ENCODE measurements at regions of chr4 and their contacts with region 1.

Region 1: GRCh38 chr4:6873792-6874461 is 35.7 kb upstream of the TBC1D14 start:
- DNase-seq: peak; percentile 89
- H3K4me3 Mint-ChIP-seq: no peak overlapping the region
- H3K27ac Mint-ChIP-seq: no peak overlapping the region
- H3K4me1 Mint-ChIP-seq: peaks cover 10% of the 10 kb centered on the region
- H3K27me3 Mint-ChIP-seq: no peaks in the 10 kb centered on the region

Region 2: GRCh38 chr4:6673660-6674499 is 200.0 kb before region 1 on chr4:
- CTCF ChIA-PET with region 1: interaction called, 33 read pairs
- DNase-seq: peak; percentile 96
- H3K4me3 Mint-ChIP-seq: peak overlapping the region; percentile 93
- H3K27ac Mint-ChIP-seq: peak overlapping the region; percentile 98
- H3K4me1 Mint-ChIP-seq: peaks cover 50% of the 10 kb centered on the region
- H3K27me3 Mint-ChIP-seq: peaks cover 4% of the 10 kb centered on the region

Region 3: GRCh38 chr4:6727081-6727942 is 146.6 kb before region 1 on chr4:
- CTCF ChIA-PET with region 1: interaction called, 13 read pairs
- DNase-seq: no peak
- H3K4me3 Mint-ChIP-seq: no peak overlapping the region
- H3K27ac Mint-ChIP-seq: no peak overlapping the region
- H3K4me1 Mint-ChIP-seq: peaks cover 10% of the 10 kb centered on the region
- H3K27me3 Mint-ChIP-seq: peaks cover 4% of the 10 kb centered on the region

Region 4: GRCh38 chr4:6783053-6783981 is 90.6 kb before region 1 on chr4:
- CTCF ChIA-PET with region 1: interaction called, 33 read pairs
- DNase-seq: peak; percentile 91
- H3K4me3 Mint-ChIP-seq: peak overlapping the region; percentile 80
- H3K27ac Mint-ChIP-seq: peak overlapping the region; percentile 91
- H3K4me1 Mint-ChIP-seq: peaks cover 58% of the 10 kb centered on the region
- H3K27me3 Mint-ChIP-seq: peaks cover 4% of the 10 kb centered on the region

Region 5: GRCh38 chr4:6885951-6886557 is 12.1 kb after region 1 on chr4:
- CTCF ChIA-PET with region 1: interaction called, 32 read pairs
- DNase-seq: no peak
- H3K4me3 Mint-ChIP-seq: no peak overlapping the region
- H3K27ac Mint-ChIP-seq: peak overlapping the region; percentile 37
- H3K4me1 Mint-ChIP-seq: peaks cover 2% of the 10 kb centered on the region
- H3K27me3 Mint-ChIP-seq: no peaks in the 10 kb centered on the region

Region 6: DNA sequence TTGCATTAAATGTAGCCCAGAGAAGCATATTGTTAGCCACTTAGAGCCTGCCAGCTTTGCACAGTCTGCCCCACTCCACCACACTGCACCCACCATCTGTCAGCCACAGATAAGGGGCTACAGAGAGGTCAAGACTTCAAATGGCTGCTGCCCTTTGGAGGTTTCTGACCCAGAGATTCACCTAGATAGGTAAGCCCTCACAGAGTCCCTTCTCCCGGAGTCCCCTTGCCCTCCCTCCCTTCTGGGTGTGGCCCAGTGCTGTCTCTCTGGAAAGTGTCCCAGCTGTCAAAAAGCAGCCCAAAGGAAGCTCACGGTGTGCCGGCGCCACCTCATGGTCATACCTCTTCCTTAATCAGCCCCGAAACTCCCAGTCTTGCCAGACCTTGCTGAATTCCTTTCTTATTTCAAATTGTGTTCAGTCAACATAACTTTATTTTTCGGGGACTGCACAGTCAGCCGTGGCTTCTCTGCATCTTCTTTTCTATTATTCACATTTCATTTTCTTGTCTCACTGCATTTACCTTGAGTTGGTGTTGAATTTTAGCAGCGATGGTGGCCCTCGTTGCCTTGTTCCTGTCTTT is 208.1 kb after region 1 on chr4:
- CTCF ChIA-PET with region 1: interaction called, 12 read pairs
- DNase-seq: peak; percentile 70
- H3K4me3 Mint-ChIP-seq: no peak overlapping the region
- H3K27ac Mint-ChIP-seq: peak overlapping the region; percentile 56
- H3K4me1 Mint-ChIP-seq: peaks cover 5% of the 10 kb centered on the region
- H3K27me3 Mint-ChIP-seq: peaks cover 59% of the 10 kb centered on the region

Region 7: GRCh38 chr4:7472442-7473013 is 598.6 kb after region 1 on chr4:
- CTCF ChIA-PET with region 1: no interaction called
- DNase-seq: no peak
- H3K4me3 Mint-ChIP-seq: no peak overlapping the region
- H3K27ac Mint-ChIP-seq: no peak overlapping the region
- H3K4me1 Mint-ChIP-seq: no peaks in the 10 kb centered on the region
- H3K27me3 Mint-ChIP-seq: peaks cover 8% of the 10 kb centered on the region

Measured in activated naive CD4-positive, alpha-beta T cell treated with anti-CD3 and anti-CD28 coated beads, Interleukin-2, amount 10 ng/mL, durations not matched to agents 7 days and 5 days (primary cell).